Right lobe of liver (tissue), 6 donors: ENCODE measurements at regions of chr7 and their contacts with region 1.

Region 1: DNA sequence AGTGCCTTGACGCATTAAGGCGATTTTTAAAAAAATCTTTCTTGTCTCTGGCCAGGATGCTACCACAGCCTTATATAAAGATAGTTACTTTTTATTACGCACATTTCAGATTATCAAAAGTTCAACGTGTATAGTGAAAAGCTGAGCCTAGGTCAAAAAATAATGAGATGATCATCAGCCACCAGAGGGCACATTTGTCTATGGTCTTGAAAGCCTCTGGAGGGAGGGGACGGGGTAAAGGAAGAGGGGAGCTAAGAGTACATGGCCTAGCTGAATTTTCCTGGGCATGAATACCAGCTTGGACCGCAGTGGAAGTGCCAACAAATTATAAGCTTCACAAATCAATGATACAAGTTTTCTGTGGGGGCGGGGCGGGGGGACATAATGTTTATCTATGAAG is 285.9 kb upstream of the SMIM30 start:
- DNase-seq: peak in 1 of 3 donors; percentile 46
- ATAC-seq: peak; percentile 67 to 75 (median 72)
- H3K4me3 ChIP-seq: no peak overlapping the region
- H3K27ac ChIP-seq: no peak overlapping the region
- H3K4me1 ChIP-seq: no peaks in the 10 kb centered on the region
- H3K27me3 ChIP-seq: no peaks in the 10 kb centered on the region
- CTCF ChIP-seq: peak; percentile 35 to 53 (median 44)
- POLR2A ChIP-seq: no peak

Region 2: GRCh38 chr7:113338071-113338696 is 66.1 kb before region 1 on chr7:
- intact Hi-C with region 1: no loop called
- DNase-seq: no peak
- ATAC-seq: no peak
- H3K4me3 ChIP-seq: no peak overlapping the region
- H3K27ac ChIP-seq: no peak overlapping the region
- H3K4me1 ChIP-seq: no peaks in the 10 kb centered on the region
- H3K27me3 ChIP-seq: no peaks in the 10 kb centered on the region
- CTCF ChIP-seq: no peak
- POLR2A ChIP-seq: no peak

Region 3: GRCh38 chr7:113698556-113699220 is 294.4 kb after region 1 on chr7:
- intact Hi-C with region 1: loop called (anchors 10 kb)
- DNase-seq: no peak
- ATAC-seq: peak; percentile 66 to 73 (median 69)
- H3K4me3 ChIP-seq: no peak overlapping the region
- H3K27ac ChIP-seq: no peak overlapping the region
- H3K4me1 ChIP-seq: no peaks in the 10 kb centered on the region
- H3K27me3 ChIP-seq: no peaks in the 10 kb centered on the region
- CTCF ChIP-seq: peak; percentile 59 to 84 (median 70)
- POLR2A ChIP-seq: no peak